Motor neuron (in vitro differentiated cells): ENCODE measurements at regions of chr7 and their contacts with region 1.

Region 1: DNA sequence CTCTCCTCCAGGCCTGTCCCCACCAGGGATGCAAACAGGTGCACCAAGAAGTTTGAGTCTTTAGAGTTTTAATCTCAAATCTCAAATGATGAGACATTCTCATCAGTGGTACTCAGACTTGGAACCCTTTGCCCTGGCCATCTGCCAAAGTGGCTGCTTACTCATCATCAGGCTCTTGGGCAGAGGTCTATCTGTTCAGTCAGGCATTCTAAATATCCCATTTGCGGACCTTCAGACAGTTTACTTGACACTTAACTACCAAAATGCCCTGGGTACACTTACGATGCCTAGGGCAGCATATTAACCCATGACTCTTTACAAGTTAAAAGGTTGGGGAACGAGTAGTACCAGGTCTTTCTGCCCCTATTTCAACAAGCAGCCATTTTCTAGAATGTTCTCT is 61.2 kb upstream of the YAE1 start:
- ATAC-seq: peak in 1 of 8 experiments; percentile 35
- H3K4me3 ChIP-seq: no peak overlapping the region
- H3K27ac ChIP-seq: no peak overlapping the region
- H3K4me1 ChIP-seq: peaks cover 3 to 4% of the 10 kb centered on the region in 2 donors

Region 2: GRCh38 chr7:38796626-38797501 is 708.1 kb before region 1 on chr7:
- in situ Hi-C with region 1: loop called in 2 of 9 experiments (anchors 25 kb)
- ATAC-seq: peak in 3 of 8 experiments; percentile 44 to 51 (median 49)
- H3K4me3 ChIP-seq: no peak overlapping the region
- H3K27ac ChIP-seq: no peak overlapping the region
- H3K4me1 ChIP-seq: no peaks in the 10 kb centered on the region

Region 3: DNA sequence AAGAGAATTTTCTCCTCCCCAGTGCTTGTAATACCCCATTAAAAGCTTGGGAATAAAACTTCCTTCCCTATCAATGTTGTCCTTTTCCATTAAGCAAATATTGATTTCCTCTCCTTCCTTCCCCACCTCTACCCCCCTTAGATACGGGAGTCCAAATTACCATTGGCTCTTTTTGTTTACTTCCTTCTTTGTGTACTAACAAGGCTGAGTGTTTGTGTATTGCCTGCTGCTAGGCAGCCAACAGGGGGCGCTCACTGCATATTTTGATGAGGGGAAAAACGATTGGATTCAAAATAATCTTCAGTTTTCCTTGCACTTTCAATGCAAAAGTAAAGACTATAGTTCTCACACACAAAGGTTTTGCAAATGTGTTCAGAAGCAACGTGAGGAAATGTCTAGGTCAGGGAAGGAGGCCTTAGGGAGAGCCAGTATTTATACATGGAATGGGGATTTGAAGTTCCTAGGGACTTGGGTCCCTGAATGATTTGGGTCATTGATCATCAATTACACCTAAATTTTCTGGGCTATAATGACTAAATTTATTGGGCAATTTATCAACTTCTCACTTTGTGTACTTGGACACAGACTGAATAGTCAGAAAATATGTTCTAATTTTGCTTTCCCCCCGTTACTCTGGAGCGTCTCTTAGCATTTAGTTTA is 572.3 kb before region 1 on chr7:
- in situ Hi-C with region 1: loop called in 1 of 9 experiments (anchors 25 kb)
- ATAC-seq: peak in 7 of 8 experiments; percentile 23 to 82 (median 52)
- H3K4me3 ChIP-seq: no peak overlapping the region
- H3K27ac ChIP-seq: no peak overlapping the region
- H3K4me1 ChIP-seq: peaks cover 8 to 15% of the 10 kb centered on the region in 2 donors